Activated naive CD8-positive, alpha-beta T cell treated with anti-CD3 and anti-CD28 coated beads, Interleukin-2, amount 10 ng/mL, durations not matched to agents 7 days and 5 days (primary cell): ENCODE measurements at regions of chr7 and their contacts with region 1.

Region 1: DNA sequence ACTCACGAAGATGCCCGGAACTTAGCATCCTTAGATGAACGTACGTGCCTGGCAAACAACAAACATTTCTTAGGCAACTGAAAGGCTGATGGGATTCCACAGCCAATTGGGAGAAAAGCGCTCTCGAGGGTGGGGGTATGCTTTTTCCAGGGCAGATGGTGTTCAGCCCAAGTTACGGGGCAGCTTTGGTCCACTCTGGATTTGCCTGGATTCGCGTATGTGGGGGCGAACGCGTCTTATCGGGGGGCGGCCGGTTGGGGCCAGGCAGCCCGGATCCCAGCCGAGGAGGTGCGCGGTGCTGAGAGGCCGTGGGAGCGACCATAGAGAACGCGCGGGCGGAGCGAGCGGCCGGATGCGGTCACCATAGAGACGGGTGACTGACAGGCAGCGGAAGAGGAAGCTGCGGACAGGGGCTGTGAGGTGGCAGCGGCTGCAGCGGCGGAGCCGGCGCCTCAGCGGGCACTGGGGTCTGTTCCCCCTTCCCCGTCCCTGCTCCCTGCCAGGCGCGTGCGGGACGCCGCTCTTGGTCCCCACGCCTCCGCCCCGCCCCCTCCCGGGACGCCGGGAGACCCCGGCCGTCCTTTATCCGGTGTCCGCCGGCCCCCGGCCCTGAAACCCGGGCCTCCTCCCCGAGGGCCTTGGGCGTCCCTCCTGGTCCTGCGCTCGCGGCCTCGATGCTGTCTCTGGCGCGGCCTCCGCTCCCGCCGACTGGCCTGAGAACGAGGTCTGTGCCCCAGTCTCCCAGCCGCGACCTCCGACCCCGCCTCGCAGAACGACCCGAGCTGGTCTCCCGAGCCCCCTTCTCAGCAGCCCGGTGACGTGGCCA is at the start of gene CHPF2:
- DNase-seq: peak; percentile 91
- ATAC-seq: peak; percentile 88
- H3K4me3 Mint-ChIP-seq: peak within 1 kb of the TSS; percentile 99
- H3K27ac Mint-ChIP-seq: peak within 1 kb of the TSS; percentile 99
- H3K4me1 Mint-ChIP-seq: peaks cover 20% of the 10 kb centered on the region
- H3K27me3 Mint-ChIP-seq: peaks cover 6% of the 10 kb centered on the region
- total RNA-seq, gene CHPF2: 44.3 to 48.4 TPM

Region 2: DNA sequence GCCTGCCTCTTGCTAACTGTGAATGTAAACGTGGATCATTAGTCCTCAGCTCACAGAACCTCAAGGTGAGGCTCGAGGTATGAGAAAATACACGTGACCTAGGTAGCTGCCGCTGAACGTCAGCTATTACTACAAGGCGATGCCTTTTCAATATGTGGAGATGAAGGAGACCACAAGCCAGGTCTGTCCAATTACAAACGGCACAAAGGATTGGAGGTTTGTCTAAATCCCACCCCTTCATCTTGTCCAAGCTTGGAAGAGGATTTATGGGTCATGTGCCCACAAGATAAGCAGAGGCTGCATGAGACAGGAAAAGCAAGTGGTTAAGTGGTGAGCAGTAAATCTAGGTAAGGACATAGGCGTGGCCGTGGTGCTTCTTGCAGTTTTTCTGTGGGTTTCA is 25.4 kb before region 1 on chr7:
- POLR2A ChIA-PET with region 1: interaction called, 10 read pairs
- DNase-seq: no peak
- ATAC-seq: peak; percentile 71
- H3K4me3 Mint-ChIP-seq: peak overlapping the region; percentile 54
- H3K27ac Mint-ChIP-seq: peak overlapping the region; percentile 59
- H3K4me1 Mint-ChIP-seq: peaks cover 19% of the 10 kb centered on the region
- H3K27me3 Mint-ChIP-seq: peaks cover 11% of the 10 kb centered on the region

Region 3: GRCh38 chr7:151261529-151261928 is 29.2 kb after region 1 on chr7:
- POLR2A ChIA-PET with region 1: no interaction called
- DNase-seq: no peak
- ATAC-seq: no peak
- H3K4me3 Mint-ChIP-seq: no peak overlapping the region
- H3K27ac Mint-ChIP-seq: no peak overlapping the region
- H3K4me1 Mint-ChIP-seq: no peaks in the 10 kb centered on the region
- H3K27me3 Mint-ChIP-seq: peaks cover 7% of the 10 kb centered on the region

Region 4: DNA sequence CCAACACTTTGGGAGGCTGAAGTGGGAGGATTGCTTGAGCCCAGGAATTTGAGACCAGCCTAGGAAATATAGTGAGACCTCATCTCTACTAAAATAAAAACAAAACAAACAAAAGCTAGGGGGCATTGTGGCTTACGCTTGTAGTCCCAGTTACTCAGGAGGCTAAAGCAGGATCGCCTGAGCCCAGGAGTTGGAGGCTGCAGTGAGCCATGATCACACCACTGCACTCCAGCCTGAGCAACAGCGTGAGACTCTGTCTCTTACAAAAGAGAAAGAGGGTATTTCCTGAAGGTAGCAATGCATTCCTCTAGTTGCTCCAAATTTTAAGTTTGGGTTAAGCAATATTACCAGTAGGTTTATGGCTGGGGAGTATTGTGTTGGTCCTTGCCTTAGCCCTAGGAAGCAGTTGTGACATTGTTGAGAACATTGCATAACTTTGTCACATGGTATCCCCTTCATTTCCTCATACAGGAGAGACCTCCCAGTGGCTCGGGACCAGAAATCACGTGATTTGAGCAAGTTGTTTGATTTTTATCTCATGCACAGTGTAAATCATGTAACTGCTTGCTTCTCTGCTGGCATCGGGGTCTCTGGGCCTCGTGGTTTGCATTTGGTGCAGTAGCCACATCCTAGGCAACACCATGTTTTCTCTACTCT is 39.5 kb after region 1 on chr7:
- POLR2A ChIA-PET with region 1: no interaction called
- DNase-seq: no peak
- ATAC-seq: peak; percentile 57
- H3K4me3 Mint-ChIP-seq: no peak overlapping the region
- H3K27ac Mint-ChIP-seq: peak overlapping the region; percentile 0
- H3K4me1 Mint-ChIP-seq: peaks cover 21% of the 10 kb centered on the region
- H3K27me3 Mint-ChIP-seq: no peaks in the 10 kb centered on the region